Mammary epithelial cell (primary cell): ENCODE measurements at regions of chr2 and their contacts with region 1.

Region 1: DNA sequence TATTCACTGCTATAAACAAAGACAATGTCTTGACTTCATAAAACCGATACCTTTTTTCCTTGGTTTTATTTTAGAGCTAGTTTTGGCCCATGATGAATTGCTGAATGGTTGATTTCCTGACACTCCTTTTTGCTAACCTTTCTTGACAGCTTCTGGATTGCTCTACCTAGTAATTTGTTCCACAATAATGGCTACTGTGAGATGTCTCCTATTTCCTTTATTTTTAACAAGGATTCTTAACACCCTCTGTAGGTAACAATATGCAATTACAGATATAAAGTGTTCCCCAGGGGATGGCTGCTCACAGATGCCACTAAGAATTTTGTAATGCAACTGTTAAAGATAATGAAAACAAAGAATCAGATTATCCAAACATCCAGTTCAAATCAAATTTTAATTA is 100.8 kb upstream of the ATP5MC3 start:
- DNase-seq: peak; percentile 10
- H3K4me3 ChIP-seq: no peak overlapping the region
- H3K27ac ChIP-seq: no peak overlapping the region
- H3K4me1 ChIP-seq: no peaks in the 10 kb centered on the region
- H3K27me3 ChIP-seq: peaks cover 3% of the 10 kb centered on the region
- CTCF ChIP-seq: peak; percentile 37 to 49

Region 2: GRCh38 chr2:174697255-174697654 is 585.0 kb before region 1 on chr2:
- CTCF ChIA-PET with region 1: no interaction called
- dilution Hi-C with region 1: no loop called
- in situ Hi-C with region 1: no loop called
- intact Hi-C with region 1: loop called (anchors 10 kb)
- DNase-seq: peak; percentile 40
- H3K4me3 ChIP-seq: no peak overlapping the region
- H3K27ac ChIP-seq: no peak overlapping the region
- H3K4me1 ChIP-seq: no peaks in the 10 kb centered on the region
- H3K27me3 ChIP-seq: peaks cover 7% of the 10 kb centered on the region
- CTCF ChIP-seq: peak; percentile 73 to 88

Region 3: DNA sequence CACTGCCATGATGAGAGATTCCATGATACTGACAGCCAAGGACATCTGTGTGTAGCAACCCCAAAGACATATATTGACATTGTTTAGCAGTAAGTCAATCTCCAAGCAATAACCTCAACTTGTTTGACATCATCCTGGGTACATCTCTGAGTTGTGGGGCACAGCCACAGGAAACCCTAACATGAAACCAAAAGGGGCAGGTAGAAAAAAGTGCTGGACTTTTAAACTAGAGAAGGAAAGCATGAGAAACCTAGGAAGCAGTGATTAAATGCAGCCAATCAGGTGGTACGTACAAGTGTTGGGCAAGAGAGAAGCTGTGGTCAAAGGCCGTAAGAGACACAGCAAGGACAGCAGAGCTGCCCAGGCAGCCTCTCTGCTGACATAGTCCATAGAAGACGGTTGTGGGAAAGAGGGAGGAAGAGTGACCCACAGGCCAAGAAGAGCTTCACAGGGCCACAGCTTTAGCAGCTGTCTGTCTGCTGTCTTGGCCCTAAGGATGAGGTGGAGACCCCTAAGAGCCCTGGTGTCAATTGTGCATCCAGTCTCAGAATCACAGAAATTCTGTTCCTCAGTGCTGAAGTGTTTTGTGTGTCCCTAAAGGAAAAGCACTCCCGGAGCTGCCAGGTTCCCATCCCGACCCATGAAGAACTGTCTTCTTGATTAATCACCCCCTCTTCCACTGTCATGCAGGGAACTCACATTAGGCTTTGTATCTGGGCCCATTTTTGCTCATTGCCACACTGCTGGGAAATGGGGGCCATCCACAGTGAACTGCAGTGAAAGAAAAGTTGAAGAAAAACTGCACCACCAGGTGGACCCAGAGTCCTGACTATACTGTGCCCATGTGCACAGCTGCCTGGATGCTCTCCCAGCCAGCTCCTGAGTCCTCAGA is 251.7 kb before region 1 on chr2:
- CTCF ChIA-PET with region 1: no interaction called
- dilution Hi-C with region 1: no loop called
- in situ Hi-C with region 1: loop called in 1 of 2 experiments (anchors 25 kb)
- intact Hi-C with region 1: no loop called
- DNase-seq: peak; percentile 31
- H3K4me3 ChIP-seq: no peak overlapping the region
- H3K27ac ChIP-seq: no peak overlapping the region
- H3K4me1 ChIP-seq: no peaks in the 10 kb centered on the region
- H3K27me3 ChIP-seq: no peaks in the 10 kb centered on the region
- CTCF ChIP-seq: peak; percentile 29 to 54

Region 4: DNA sequence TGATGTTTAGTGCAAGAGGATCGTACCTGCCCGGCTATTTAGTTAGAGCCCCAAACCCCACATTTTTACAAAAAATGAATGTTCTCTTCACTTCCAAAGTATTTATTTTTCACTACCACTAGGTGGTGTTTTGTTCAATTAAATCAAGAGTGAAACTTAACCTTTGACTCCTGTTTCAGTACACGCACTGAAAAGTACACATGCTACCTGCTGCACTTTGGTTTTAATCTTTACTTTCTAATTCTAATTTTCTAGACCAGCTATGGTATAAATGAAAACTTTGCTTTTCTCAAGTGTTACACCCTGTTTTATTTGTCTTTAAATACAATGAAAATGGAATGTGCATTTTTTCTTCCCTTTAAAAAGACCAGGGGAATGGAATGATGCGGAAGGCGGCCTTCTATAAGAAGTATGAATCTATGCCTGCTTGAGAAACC is 245.7 kb before region 1 on chr2:
- CTCF ChIA-PET with region 1: interaction called, 3 read pairs
- dilution Hi-C with region 1: no loop called
- in situ Hi-C with region 1: loop called in 1 of 2 experiments (anchors 25 kb)
- intact Hi-C with region 1: loop called (anchors 2 kb)
- DNase-seq: no peak
- H3K4me3 ChIP-seq: no peak overlapping the region
- H3K27ac ChIP-seq: no peak overlapping the region
- H3K4me1 ChIP-seq: no peaks in the 10 kb centered on the region
- H3K27me3 ChIP-seq: no peaks in the 10 kb centered on the region
- CTCF ChIP-seq: peak; percentile 14 to 49

Region 5: DNA sequence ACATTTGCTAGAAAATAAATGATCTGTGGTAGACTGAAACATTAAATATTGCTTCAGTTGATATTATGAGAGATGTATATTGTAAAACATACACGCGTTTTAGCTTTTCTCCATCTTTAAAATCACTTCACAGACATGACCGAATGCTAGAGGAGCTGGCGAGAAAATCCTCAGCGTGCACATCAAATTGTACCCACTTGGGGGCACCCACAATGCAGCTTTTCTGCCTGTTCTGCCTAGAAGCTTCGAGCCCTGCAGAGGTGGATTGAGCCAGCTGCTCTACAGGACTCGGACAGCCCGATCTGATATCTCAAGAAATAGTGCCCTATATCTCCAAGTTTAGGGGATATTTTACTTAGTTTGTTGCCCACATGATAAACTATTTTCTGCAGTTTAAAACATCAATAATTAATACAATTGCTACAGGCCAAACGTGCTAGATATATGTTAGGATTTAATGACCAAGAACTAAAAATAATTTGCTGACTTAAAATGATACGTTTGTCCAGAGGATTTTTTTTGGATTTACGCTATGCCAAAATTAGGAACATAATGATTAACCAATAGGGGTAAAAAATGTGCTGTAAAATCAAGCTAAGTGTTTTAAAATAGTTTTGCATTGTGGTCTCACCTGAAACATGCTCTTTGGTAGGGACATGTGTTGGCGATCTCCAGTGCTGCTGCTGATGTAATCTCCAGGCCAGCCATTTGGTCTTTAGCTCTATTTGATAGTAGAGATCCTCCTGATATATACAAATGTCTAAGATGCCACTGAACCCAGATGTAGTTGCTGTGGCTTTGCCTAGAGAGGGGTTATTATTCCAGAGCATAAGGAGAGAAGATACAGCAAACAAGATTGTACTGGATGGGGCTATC is 78.4 kb before region 1 on chr2:
- CTCF ChIA-PET with region 1: no interaction called
- dilution Hi-C with region 1: no loop called
- in situ Hi-C with region 1: no loop called
- intact Hi-C with region 1: loop called (anchors 2 kb)
- DNase-seq: peak; percentile 29
- H3K4me3 ChIP-seq: no peak overlapping the region
- H3K27ac ChIP-seq: no peak overlapping the region
- H3K4me1 ChIP-seq: no peaks in the 10 kb centered on the region
- H3K27me3 ChIP-seq: peaks cover 2% of the 10 kb centered on the region
- CTCF ChIP-seq: peak; percentile 57 to 69

Region 6: DNA sequence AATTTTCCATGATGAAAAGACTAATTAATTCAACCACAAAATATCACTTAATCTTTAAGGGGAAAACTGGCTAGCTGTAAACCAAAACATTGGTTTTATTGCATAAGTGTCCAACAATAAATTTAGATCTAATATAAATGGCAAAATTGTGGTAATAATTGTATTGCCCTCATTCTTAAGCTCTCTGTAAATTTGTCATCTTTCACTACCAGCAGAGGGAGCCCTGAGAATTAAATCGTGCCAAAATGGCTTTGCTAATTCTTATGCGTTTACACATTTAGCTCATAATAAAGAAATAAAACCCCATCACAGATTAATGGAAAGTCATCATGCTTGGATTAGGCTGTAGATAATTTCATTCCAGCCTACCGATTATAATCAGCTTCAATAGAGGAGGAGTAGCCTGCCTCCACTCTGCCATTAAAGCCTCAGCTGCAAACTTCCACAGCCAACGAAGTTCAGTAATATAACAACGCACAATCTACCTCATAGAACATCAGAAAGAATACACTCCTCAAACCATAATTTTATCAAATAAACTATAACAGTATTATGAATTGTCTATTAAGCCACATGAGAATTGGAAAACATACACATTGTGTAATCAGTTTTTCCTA is 30.8 kb before region 1 on chr2:
- CTCF ChIA-PET with region 1: no interaction called
- dilution Hi-C with region 1: no loop called
- in situ Hi-C with region 1: no loop called
- intact Hi-C with region 1: loop called (anchors 2 kb)
- DNase-seq: no peak
- H3K4me3 ChIP-seq: no peak overlapping the region
- H3K27ac ChIP-seq: no peak overlapping the region
- H3K4me1 ChIP-seq: no peaks in the 10 kb centered on the region
- H3K27me3 ChIP-seq: no peaks in the 10 kb centered on the region
- CTCF ChIP-seq: peak; percentile 62 to 73

Region 7: GRCh38 chr2:175309799-175310198 is 27.5 kb after region 1 on chr2:
- CTCF ChIA-PET with region 1: no interaction called
- dilution Hi-C with region 1: no loop called
- in situ Hi-C with region 1: no loop called
- intact Hi-C with region 1: no loop called
- DNase-seq: no peak
- H3K4me3 ChIP-seq: no peak overlapping the region
- H3K27ac ChIP-seq: no peak overlapping the region
- H3K4me1 ChIP-seq: no peaks in the 10 kb centered on the region
- H3K27me3 ChIP-seq: no peaks in the 10 kb centered on the region
- CTCF ChIP-seq: peak; percentile 18 to 57

Region 8: GRCh38 chr2:175844169-175844568 is 561.9 kb after region 1 on chr2:
- CTCF ChIA-PET with region 1: no interaction called
- dilution Hi-C with region 1: no loop called
- in situ Hi-C with region 1: no loop called
- intact Hi-C with region 1: no loop called
- DNase-seq: peak; percentile 65
- H3K4me3 ChIP-seq: no peak overlapping the region
- H3K27ac ChIP-seq: peak overlapping the region; percentile 63
- H3K4me1 ChIP-seq: peaks cover 11% of the 10 kb centered on the region
- H3K27me3 ChIP-seq: no peaks in the 10 kb centered on the region
- CTCF ChIP-seq: no peak